Activated CD4-positive, alpha-beta T cell treated with anti-CD3 and anti-CD28 coated beads for 36 hours (primary cell): ENCODE measurements at regions of chr9 and their contacts with region 1.

Region 1: GRCh38 chr9:36400332-36401163 is 479 bp upstream of the RNF38 start:
- DNase-seq: peak; percentile 96
- ATAC-seq: peak; percentile 77
- H3K4me3 Mint-ChIP-seq: peak overlapping the region; percentile 93
- H3K27ac Mint-ChIP-seq: peak overlapping the region; percentile 98
- H3K4me1 Mint-ChIP-seq: peaks cover 39% of the 10 kb centered on the region
- H3K27me3 Mint-ChIP-seq: no peaks in the 10 kb centered on the region

Region 2: GRCh38 chr9:35756275-35757225 is 644.0 kb before region 1 on chr9:
- CTCF ChIA-PET with region 1: no interaction called
- POLR2A ChIA-PET with region 1: no interaction called
- intact Hi-C with region 1: loop called in 1 of 2 experiments (anchors 10 kb)
- DNase-seq: peak; percentile 92
- ATAC-seq: peak; percentile 92
- H3K4me3 Mint-ChIP-seq: peak overlapping the region; percentile 97
- H3K27ac Mint-ChIP-seq: peak overlapping the region; percentile 94
- H3K4me1 Mint-ChIP-seq: peaks cover 34% of the 10 kb centered on the region
- H3K27me3 Mint-ChIP-seq: no peaks in the 10 kb centered on the region

Region 3: GRCh38 chr9:36190388-36191287 is 209.9 kb before region 1 on chr9 and contains the start of gene CLTA:
- CTCF ChIA-PET with region 1: interaction called, 4 read pairs
- POLR2A ChIA-PET with region 1: interaction called, 5 read pairs
- intact Hi-C with region 1: loop called in 1 of 2 experiments (anchors 1 kb)
- DNase-seq: peak; percentile 96
- ATAC-seq: peak; percentile 99
- H3K4me3 Mint-ChIP-seq: peak within 1 kb of the TSS; percentile 95
- H3K27ac Mint-ChIP-seq: peak within 1 kb of the TSS; percentile 88
- H3K4me1 Mint-ChIP-seq: peaks cover 45% of the 10 kb centered on the region
- H3K27me3 Mint-ChIP-seq: no peaks in the 10 kb centered on the region
- total RNA-seq, gene CLTA: 123 to 133 TPM

Region 4: GRCh38 chr9:36382484-36382883 is 18.1 kb before region 1 on chr9:
- CTCF ChIA-PET with region 1: interaction called, 6 read pairs
- POLR2A ChIA-PET with region 1: interaction called, 4 read pairs
- intact Hi-C with region 1: loop called in 1 of 2 experiments (anchors 2 kb)
- DNase-seq: no peak
- ATAC-seq: no peak
- H3K4me3 Mint-ChIP-seq: no peak overlapping the region
- H3K27ac Mint-ChIP-seq: peak overlapping the region; percentile 26
- H3K4me1 Mint-ChIP-seq: peaks cover 69% of the 10 kb centered on the region
- H3K27me3 Mint-ChIP-seq: no peaks in the 10 kb centered on the region

Region 5: DNA sequence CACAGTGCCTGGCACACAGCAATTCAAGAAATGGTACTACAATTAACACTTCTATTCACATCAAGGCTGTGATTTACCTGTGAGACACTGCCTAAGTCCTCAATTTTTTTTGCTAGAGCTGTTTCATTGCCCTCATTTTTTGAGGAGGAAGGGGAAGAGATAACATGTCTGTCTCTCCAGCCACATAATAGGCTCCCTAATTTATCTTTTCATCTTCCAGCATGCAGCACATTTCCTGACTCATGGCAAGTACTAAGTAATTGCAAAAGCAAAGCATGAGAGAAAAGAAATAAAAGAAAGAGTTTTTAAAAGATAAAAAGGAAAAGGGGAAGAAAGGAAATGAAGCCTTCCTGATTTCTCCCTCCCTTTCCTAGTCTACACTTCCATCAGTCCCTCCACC is 26.4 kb after region 1 on chr9:
- CTCF ChIA-PET with region 1: no interaction called
- POLR2A ChIA-PET with region 1: no interaction called
- intact Hi-C with region 1: no loop called
- DNase-seq: no peak
- ATAC-seq: no peak
- H3K4me3 Mint-ChIP-seq: no peak overlapping the region
- H3K27ac Mint-ChIP-seq: no peak overlapping the region
- H3K4me1 Mint-ChIP-seq: peaks cover 21% of the 10 kb centered on the region
- H3K27me3 Mint-ChIP-seq: no peaks in the 10 kb centered on the region

Region 6: GRCh38 chr9:36487482-36488388 is 87.2 kb after region 1 on chr9:
- CTCF ChIA-PET with region 1: interaction called, 3 read pairs
- POLR2A ChIA-PET with region 1: no interaction called
- intact Hi-C with region 1: loop called (anchors 1 to 5 kb)
- DNase-seq: peak; percentile 95
- ATAC-seq: peak; percentile 93
- H3K4me3 Mint-ChIP-seq: peak overlapping the region; percentile 93
- H3K27ac Mint-ChIP-seq: peak overlapping the region; percentile 99
- H3K4me1 Mint-ChIP-seq: peaks cover 63% of the 10 kb centered on the region
- H3K27me3 Mint-ChIP-seq: no peaks in the 10 kb centered on the region

Region 7: DNA sequence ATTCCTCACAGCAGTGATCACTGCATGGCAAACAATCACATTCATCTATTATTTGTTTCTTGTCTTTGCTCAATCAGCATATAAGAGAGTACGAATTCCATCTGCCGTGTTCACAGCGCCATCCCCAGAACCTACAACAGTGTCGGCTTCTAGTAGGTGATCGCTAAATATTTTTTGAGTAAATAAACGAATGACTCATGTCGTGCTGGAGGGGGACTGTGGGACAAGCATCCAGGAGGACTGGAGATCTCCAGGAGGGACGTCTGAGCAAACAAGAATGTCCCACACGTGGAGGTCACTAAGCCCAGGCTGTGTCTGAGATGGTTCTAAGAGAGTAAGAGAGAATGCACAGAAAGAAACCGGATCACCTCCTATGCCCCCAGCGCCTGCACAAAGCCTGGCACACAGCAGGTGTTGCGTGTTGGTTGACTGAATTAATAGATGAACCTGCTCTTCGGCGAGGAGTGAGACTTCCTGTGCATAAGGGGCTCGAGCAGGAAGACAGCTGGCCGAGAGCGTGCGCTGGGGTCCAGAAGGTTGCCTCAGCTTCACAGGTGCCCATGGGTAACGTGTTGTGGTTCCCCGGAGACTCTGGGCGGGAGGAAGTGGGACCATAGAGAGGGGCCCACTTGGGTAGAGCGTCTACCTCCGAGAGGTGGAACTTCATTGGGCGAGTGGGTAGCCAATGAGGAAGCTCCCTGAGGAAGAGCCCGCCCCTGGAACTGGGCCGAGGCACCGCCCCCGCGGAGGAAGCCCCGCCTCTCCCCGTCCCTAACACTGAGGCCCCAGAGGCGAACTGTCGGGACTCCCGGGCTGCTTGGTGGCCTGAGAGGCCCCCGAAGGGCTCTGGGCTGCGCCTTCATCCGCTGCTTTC is 365.2 kb after region 1 on chr9:
- CTCF ChIA-PET with region 1: no interaction called
- POLR2A ChIA-PET with region 1: no interaction called
- intact Hi-C with region 1: loop called in 1 of 2 experiments (anchors 1 kb)
- DNase-seq: peak; percentile 95
- ATAC-seq: peak; percentile 99
- H3K4me3 Mint-ChIP-seq: no peak overlapping the region
- H3K27ac Mint-ChIP-seq: peak overlapping the region; percentile 16
- H3K4me1 Mint-ChIP-seq: peaks cover 2% of the 10 kb centered on the region
- H3K27me3 Mint-ChIP-seq: peaks cover 6% of the 10 kb centered on the region

Region 8: DNA sequence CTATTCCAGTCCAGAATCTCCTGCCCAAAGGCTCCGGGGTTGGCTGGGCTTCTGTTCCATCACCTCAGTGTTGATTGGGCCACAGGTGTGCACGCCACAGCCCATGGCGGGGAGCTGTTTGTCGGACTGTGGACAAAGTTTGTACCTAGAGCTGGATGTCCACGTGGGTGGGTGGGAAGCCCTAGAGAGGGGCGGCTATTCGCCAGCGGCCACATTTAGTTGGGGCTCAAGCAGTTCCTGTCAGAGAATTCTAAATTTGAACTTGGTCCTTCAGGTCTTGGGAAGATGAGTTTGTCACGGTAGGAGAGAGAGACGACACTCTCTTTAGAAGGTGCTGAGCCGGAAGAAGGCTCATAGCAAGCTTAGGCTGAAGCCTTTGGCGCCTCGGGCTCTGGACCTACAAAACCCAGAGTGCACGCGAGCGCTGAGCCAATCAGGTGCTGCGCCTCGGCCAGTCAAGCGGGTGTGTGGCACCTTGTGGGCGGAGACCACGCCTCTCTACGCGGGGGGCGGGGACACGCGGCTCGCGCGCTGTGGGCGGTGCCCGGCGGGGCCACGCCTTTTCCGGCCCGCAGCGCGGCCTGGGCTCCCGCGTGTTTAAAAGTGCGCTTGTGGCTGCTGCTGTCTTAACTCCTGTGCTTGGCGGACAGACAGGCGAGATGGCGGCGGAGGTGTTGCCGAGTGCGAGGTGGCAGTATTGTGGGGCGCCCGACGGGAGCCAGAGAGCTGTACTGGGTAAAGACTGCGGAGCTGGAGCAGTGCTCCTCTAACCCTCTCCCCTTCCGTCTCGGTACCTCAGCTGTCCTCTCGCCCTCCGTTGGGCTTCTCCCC is 1085.1 kb after region 1 on chr9 and contains the start of gene POLR1E:
- CTCF ChIA-PET with region 1: no interaction called
- POLR2A ChIA-PET with region 1: no interaction called
- intact Hi-C with region 1: loop called in 1 of 2 experiments (anchors 2 kb)
- DNase-seq: peak; percentile 98
- ATAC-seq: peak; percentile 97
- H3K4me3 Mint-ChIP-seq: peak within 1 kb of the TSS; percentile 94
- H3K27ac Mint-ChIP-seq: peak within 1 kb of the TSS; percentile 93
- H3K4me1 Mint-ChIP-seq: peaks cover 41% of the 10 kb centered on the region
- H3K27me3 Mint-ChIP-seq: peaks cover 7% of the 10 kb centered on the region
- total RNA-seq, gene POLR1E: 67.5 to 69.2 TPM